CD8-positive, alpha-beta T cell (primary cell): ENCODE measurements at regions of chr7 and their contacts with region 1.

Region 1: DNA sequence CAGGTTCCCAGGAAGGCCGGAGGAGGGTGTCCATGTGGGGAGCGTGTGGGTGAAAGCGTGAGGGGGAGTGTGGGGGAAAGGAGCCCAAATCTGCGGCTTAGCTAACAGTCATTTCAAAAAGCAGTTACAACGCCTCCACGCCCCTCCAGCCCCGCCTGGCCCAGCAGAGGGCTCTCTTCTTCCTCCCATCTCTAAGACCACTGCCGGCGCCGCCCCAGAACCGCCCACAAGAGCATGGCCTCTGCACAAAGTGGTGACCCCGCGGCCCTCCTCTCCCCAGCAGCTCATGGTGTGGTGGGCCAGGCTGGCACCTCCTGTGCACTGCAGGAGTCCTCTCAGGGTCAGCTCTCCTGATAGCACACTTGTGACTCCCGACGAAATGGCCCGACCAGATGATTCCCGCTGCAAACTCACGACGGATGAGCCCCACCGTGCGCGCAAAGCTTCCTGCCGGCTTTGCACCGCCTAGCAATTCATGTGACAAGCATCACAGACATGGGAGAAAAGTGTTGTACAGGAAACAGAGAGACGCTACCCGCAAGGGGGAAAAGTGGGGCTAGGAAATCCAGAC is 12.4 kb upstream of the HUS1 start:
- DNase-seq: peak; percentile 73 to 92 (median 88)
- ATAC-seq: peak; percentile 95
- H3K4me3 ChIP-seq: peak overlapping the region; percentile 67 to 96
- H3K4me3 Mint-ChIP-seq: peak overlapping the region; percentile 90
- H3K27ac ChIP-seq: peak overlapping the region; percentile 72 to 80
- H3K27ac Mint-ChIP-seq: peak overlapping the region; percentile 93
- H3K4me1 ChIP-seq: peaks cover 17% of the 10 kb centered on the region
- H3K4me1 Mint-ChIP-seq: peaks cover 18% of the 10 kb centered on the region
- H3K27me3 ChIP-seq: no peaks in the 10 kb centered on the region
- H3K27me3 Mint-ChIP-seq: no peaks in the 10 kb centered on the region
- CTCF ChIP-seq: peak; percentile 51

Region 2: GRCh38 chr7:47266131-47266706 is 725.6 kb before region 1 on chr7:
- CTCF ChIA-PET with region 1: no interaction called
- POLR2A ChIA-PET with region 1: no interaction called
- intact Hi-C with region 1: no loop called
- DNase-seq: peak in 3 of 9 experiments; percentile 26 to 48 (median 44)
- ATAC-seq: peak; percentile 46
- H3K4me3 ChIP-seq: no peak overlapping the region
- H3K4me3 Mint-ChIP-seq: no peak overlapping the region
- H3K27ac ChIP-seq: no peak overlapping the region
- H3K27ac Mint-ChIP-seq: no peak overlapping the region
- H3K4me1 ChIP-seq: no peaks in the 10 kb centered on the region
- H3K4me1 Mint-ChIP-seq: no peaks in the 10 kb centered on the region
- H3K27me3 ChIP-seq: no peaks in the 10 kb centered on the region
- H3K27me3 Mint-ChIP-seq: no peaks in the 10 kb centered on the region
- CTCF ChIP-seq: peak; percentile 60

Region 3: GRCh38 chr7:47979145-47979831 is 12.5 kb before region 1 on chr7 and contains the start of gene HUS1:
- CTCF ChIA-PET with region 1: interaction called, 17 read pairs
- POLR2A ChIA-PET with region 1: interaction called, 9 read pairs
- intact Hi-C with region 1: loop called (anchors 1 kb)
- DNase-seq: peak; percentile 85 to 95 (median 90)
- ATAC-seq: peak; percentile 98
- H3K4me3 ChIP-seq: peak within 1 kb of the TSS; percentile 83 to 86
- H3K4me3 Mint-ChIP-seq: peak within 1 kb of the TSS; percentile 94
- H3K27ac ChIP-seq: peak within 1 kb of the TSS; percentile 93 to 96
- H3K27ac Mint-ChIP-seq: peak within 1 kb of the TSS; percentile 99
- H3K4me1 ChIP-seq: peaks cover 13% of the 10 kb centered on the region
- H3K4me1 Mint-ChIP-seq: peaks cover 26% of the 10 kb centered on the region
- H3K27me3 ChIP-seq: no peaks in the 10 kb centered on the region
- H3K27me3 Mint-ChIP-seq: no peaks in the 10 kb centered on the region
- CTCF ChIP-seq: no peak
- total RNA-seq, gene HUS1: 73.4 to 82.9 TPM

Region 4: DNA sequence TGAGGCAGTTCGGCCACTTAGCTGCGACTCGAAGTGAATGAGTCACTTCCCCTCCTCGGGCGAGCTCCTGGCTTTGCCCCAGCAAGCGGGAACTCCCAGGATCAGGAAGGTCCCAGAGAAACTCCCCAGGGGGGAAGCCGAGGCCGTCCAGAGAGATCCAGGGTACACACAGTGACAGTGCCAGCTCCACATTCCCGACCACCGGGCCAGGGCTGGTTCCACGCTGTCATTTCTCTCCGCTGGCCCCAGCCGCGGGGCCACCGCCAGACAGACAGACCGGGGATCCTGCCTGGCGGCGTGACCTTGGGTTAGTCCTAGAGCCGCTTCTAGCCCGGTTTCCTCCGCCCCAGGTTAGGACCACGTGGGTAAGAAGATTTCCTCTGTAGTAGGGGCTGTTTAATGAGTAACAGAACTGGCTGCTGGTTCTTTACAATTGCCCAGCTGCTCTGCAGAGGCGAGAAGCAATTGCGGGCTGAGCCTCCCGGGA is 96.8 kb after region 1 on chr7:
- CTCF ChIA-PET with region 1: interaction called, 11 read pairs
- POLR2A ChIA-PET with region 1: interaction called, 25 read pairs
- intact Hi-C with region 1: loop called (anchors 1 to 5 kb)
- DNase-seq: no peak
- ATAC-seq: no peak
- H3K4me3 ChIP-seq: peak overlapping the region; percentile 87 to 92
- H3K4me3 Mint-ChIP-seq: peak overlapping the region; percentile 89
- H3K27ac ChIP-seq: peak overlapping the region; percentile 85 to 86
- H3K27ac Mint-ChIP-seq: peak overlapping the region; percentile 94
- H3K4me1 ChIP-seq: peaks cover 71% of the 10 kb centered on the region
- H3K4me1 Mint-ChIP-seq: peaks cover 75% of the 10 kb centered on the region
- H3K27me3 ChIP-seq: no peaks in the 10 kb centered on the region
- H3K27me3 Mint-ChIP-seq: no peaks in the 10 kb centered on the region
- CTCF ChIP-seq: no peak

Region 5: DNA sequence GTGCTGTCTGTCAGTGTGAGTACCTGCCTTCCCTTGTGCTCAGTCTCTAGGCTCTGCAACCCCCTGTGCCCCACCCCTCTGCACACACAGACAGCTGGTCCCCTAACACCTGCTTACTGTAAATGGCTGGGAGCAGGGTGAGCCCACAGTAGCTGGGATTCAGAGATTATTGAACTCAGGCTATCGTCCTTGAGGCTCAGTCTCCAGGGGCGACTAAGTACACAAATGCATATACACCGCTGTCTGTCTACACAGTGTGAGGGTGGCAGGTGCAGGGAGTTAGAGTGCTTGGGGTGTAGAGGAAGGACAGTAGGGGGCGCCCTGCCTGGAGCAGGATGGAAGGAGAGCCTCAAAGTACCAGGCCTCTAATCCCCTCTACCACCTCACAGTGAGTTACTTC is 110.1 kb after region 1 on chr7:
- CTCF ChIA-PET with region 1: interaction called, 127 read pairs
- POLR2A ChIA-PET with region 1: interaction called, 5 read pairs
- intact Hi-C with region 1: no loop called
- DNase-seq: peak in 3 of 9 experiments; percentile 27 to 49 (median 42)
- ATAC-seq: no peak
- H3K4me3 ChIP-seq: no peak overlapping the region
- H3K4me3 Mint-ChIP-seq: no peak overlapping the region
- H3K27ac ChIP-seq: peak overlapping the region in 1 of 2 experiments; percentile 33
- H3K27ac Mint-ChIP-seq: peak overlapping the region; percentile 28
- H3K4me1 ChIP-seq: peaks cover 38% of the 10 kb centered on the region
- H3K4me1 Mint-ChIP-seq: peaks cover 48% of the 10 kb centered on the region
- H3K27me3 ChIP-seq: no peaks in the 10 kb centered on the region
- H3K27me3 Mint-ChIP-seq: no peaks in the 10 kb centered on the region
- CTCF ChIP-seq: peak; percentile 23

Region 6: GRCh38 chr7:48118041-48118440 is 126.2 kb after region 1 on chr7:
- CTCF ChIA-PET with region 1: interaction called, 10 read pairs
- POLR2A ChIA-PET with region 1: no interaction called
- intact Hi-C with region 1: no loop called
- DNase-seq: no peak
- ATAC-seq: no peak
- H3K4me3 ChIP-seq: no peak overlapping the region
- H3K4me3 Mint-ChIP-seq: no peak overlapping the region
- H3K27ac ChIP-seq: no peak overlapping the region
- H3K27ac Mint-ChIP-seq: no peak overlapping the region
- H3K4me1 ChIP-seq: no peaks in the 10 kb centered on the region
- H3K4me1 Mint-ChIP-seq: no peaks in the 10 kb centered on the region
- H3K27me3 ChIP-seq: no peaks in the 10 kb centered on the region
- H3K27me3 Mint-ChIP-seq: peaks cover 2% of the 10 kb centered on the region
- CTCF ChIP-seq: no peak